ENCODE measurements at regions of chr1 and their contacts with region 1.

Region 1: GRCh38 chr1:40939320-40940059 is 40.0 kb upstream of the CTPS1 start:
- DNase-seq: peak in 1 of 2 donors; percentile 68
- H3K4me3 ChIP-seq: no peak overlapping the region
- H3K27ac ChIP-seq: peak overlapping the region in 1 of 2 donors; percentile 54
- H3K4me1 ChIP-seq: peaks cover 8 to 58% of the 10 kb centered on the region in 2 donors
- H3K27me3 ChIP-seq: no peaks in the 10 kb centered on the region
- CTCF ChIP-seq: no peak

Region 2: DNA sequence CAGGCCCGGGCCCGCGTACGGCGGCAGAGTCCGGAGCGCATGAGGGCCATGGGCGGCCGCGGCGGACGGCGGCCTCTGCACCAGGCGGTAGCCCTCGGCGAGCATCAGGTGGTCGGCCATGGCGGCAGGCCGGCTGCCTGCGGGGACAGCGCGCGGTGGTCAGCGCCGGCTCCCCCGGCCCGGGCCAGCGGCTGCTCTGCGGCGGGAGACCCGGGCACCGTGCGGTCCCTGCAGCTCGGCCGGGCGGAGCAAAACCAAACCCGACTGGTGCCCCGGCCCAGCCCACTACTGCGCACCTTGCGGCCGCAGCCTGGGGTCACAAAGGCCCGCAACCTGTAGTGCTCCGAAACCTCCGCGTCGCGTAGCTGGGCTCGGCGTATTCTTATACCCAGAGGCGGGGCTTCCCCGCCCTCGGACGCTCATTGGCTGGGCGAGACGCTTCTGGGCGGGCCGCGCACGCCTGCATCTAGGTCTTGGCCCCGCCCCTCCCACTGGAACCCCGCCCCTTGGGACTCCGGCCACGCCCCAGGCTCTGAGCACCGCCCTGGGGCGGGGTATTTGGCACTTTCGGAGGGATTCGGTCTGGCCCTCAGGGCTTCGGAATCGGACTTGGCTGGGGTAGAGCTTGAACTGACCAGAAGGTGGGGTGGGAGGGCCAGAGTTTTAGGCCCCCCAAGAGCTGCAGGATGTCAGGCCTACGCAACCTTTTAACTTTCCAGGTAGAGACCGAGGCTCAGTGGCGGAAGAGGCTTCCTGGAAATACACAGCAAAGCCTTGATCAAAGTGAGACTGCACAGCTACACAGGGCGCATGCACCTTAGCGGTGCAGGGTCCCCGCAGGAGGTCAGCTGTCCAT is 77.3 kb before region 1 on chr1 and contains the start of gene CITED4:
- intact Hi-C with region 1: loop called (anchors 1 kb)
- DNase-seq: peak; percentile 82 to 97
- H3K4me3 ChIP-seq: peak within 1 kb of the TSS; percentile 97
- H3K27ac ChIP-seq: peak within 1 kb of the TSS; percentile 79 to 87
- H3K4me1 ChIP-seq: peaks cover 10 to 25% of the 10 kb centered on the region in 2 donors
- H3K27me3 ChIP-seq: no peaks in the 10 kb centered on the region
- CTCF ChIP-seq: peak in 2 of 3 experiments; percentile 14 to 30
- total RNA-seq, gene CITED4: 47.6 TPM

Region 3: DNA sequence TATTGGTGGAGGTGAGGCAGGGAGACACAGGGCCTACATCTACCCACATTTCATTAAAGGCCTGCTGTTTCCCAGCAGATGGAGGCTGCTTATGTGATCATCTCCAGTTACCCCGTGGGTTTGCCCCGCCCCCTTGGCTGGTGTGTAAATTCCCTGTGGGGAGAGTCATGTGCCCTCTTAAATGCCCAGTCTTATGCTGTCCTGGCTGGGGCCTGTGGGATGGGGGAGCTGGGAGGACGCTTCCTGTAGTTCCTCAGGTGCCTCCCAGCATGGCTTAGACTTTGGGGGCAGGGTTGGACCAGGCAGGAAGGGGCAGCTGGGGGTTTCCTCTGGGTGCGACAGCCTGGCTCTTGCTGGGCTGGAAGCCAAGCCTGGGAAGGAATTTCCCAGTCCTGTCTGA is 61.8 kb before region 1 on chr1:
- intact Hi-C with region 1: loop called (anchors 5 kb)
- DNase-seq: peak; percentile 81 to 94
- H3K4me3 ChIP-seq: no peak overlapping the region
- H3K27ac ChIP-seq: peak overlapping the region; percentile 83 to 84
- H3K4me1 ChIP-seq: peaks cover 0 to 24% of the 10 kb centered on the region in 2 donors
- H3K27me3 ChIP-seq: no peaks in the 10 kb centered on the region
- CTCF ChIP-seq: no peak

Region 4: DNA sequence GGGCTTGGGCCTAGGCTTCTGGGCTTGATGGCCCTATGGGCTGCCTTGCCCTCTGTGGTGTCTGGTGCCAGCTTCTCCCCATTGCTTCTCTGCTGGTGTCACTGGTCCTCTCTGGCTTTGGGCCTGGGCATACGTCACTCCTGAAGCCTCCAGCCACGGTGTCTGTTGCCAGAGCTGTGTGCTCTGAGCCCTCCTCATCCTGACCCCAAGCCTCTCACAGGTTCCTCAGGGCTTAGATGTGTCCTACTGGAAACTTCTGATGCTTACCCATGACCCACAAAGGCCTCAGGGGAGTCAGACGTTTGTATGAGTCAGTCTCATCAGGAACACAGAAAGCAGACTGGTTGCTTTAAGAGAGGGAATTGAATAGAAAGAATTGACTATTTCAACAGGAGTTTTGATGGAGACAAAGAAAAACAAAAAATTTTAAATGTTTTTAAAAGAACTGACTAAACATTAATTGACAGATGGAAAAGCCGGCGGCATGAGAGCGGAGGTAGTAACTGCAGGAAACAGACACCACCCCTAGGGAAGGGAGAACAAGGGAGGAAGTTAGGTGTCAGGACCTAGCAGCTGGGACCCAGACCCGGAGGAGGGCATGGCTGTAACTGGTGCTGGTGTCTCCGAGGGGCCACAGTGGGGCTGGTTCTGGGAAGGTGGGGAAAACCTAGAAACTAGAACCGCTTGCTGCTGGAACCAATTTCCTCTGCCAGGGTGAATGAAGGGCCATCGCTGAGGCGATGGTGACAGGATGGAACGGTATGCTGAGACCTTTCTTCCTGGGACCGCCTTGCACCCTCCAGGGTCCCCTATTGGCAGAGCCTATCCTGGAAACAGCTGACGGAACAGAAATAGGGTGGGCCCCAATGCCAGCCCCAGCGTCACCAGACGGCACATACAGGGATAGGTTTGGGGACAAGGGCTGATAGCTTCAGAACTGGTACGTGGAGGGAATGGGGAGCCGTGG is 37.3 kb before region 1 on chr1:
- intact Hi-C with region 1: loop called (anchors 5 kb)
- DNase-seq: peak in 1 of 2 donors; percentile 83
- H3K4me3 ChIP-seq: no peak overlapping the region
- H3K27ac ChIP-seq: peak overlapping the region; percentile 58 to 61
- H3K4me1 ChIP-seq: peaks cover 0 to 29% of the 10 kb centered on the region in 2 donors
- H3K27me3 ChIP-seq: no peaks in the 10 kb centered on the region
- CTCF ChIP-seq: no peak

Measured in ascending aorta (tissue), 2 donors.